ENCODE measurements at regions of chr11 and their contacts with region 1.

Region 1: GRCh38 chr11:112599856-112600533 is 339.3 kb upstream of the PLET1 start:
- DNase-seq: no peak
- H3K4me3 ChIP-seq: no peak overlapping the region
- H3K27ac ChIP-seq: no peak overlapping the region
- H3K4me1 ChIP-seq: no peaks in the 10 kb centered on the region
- H3K27me3 ChIP-seq: no peaks in the 10 kb centered on the region
- CTCF ChIP-seq: no peak

Region 2: GRCh38 chr11:112697381-112698178 is 97.6 kb after region 1 on chr11:
- CTCF ChIA-PET with region 1: no interaction called
- dilution Hi-C with region 1: loop called (anchors 5 kb)
- in situ Hi-C with region 1: no loop called
- intact Hi-C with region 1: no loop called
- DNase-seq: no peak
- H3K4me3 ChIP-seq: no peak overlapping the region
- H3K27ac ChIP-seq: no peak overlapping the region
- H3K4me1 ChIP-seq: peaks cover 14% of the 10 kb centered on the region
- H3K27me3 ChIP-seq: no peaks in the 10 kb centered on the region
- CTCF ChIP-seq: peak; percentile 13 to 25